Cardiac septum (tissue), 1 donor: ENCODE measurements at regions of chr13 and their contacts with region 1.

Region 1: DNA sequence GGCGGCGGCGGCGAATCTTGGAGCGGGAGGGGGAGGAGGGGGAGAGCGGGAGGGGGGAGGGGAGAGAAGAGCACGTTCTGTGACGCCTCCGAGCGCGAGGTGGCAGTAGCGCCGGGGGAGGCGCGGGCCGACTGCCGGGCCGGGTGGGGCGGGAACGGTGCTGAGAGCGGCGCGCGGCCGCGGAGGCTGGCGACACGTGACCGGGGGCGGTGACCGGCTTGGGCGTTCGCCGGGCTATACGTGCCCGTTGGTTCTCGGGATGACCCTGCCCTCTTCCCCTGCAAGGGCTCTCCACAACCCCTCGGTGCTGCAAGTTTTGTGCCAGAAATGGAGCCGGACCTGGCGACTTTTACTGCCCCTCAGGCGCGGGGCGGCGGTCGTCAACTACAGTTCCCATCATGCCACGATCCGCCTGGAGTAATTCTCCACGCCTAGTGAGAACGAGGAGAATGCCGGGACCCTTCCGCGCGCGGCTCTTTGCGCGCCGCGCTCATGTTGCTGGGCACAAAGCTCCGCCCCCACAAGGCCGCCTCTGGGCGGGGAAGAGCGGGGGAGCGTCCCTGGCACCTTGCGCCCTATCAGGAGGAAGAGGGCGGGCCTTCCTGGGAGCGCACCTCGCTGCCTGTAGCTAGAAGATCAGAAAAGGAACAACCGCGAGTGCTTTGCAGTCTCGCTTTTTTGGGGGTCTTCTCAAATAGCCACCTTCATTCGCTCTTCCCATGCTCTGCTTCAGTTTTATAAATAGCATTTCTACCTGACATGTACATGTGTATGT is at the start of gene KPNA3:
- DNase-seq: peak; percentile 98
- total RNA-seq, gene KPNA3: 46.7 TPM

Region 2: GRCh38 chr13:49690992-49691886 is 101.5 kb before region 1 on chr13 and contains the start of gene EBPL:
- intact Hi-C with region 1: loop called (anchors 2 kb)
- DNase-seq: peak; percentile 98
- total RNA-seq, gene EBPL: 6.7 TPM

Region 3: DNA sequence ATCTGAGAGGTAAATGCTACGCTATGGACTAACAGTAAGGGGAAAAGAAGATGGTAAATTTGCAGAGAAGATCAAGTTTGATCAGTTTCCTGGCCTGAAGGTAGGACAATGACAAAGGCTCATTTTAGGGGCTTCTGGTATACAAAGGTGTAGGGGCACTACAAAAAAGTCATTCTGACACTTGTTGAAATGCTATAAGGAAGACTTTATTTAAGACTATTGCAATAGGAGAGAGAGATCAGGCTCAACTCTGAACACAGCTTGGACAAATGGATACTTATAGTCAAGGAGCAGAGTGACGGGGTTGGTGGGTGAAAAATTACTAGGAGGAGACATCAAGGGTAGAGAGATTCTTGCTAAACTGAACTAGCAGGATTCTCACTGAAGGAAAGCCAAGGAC is 37.0 kb after region 1 on chr13:
- intact Hi-C with region 1: no loop called
- DNase-seq: no peak

Region 4: DNA sequence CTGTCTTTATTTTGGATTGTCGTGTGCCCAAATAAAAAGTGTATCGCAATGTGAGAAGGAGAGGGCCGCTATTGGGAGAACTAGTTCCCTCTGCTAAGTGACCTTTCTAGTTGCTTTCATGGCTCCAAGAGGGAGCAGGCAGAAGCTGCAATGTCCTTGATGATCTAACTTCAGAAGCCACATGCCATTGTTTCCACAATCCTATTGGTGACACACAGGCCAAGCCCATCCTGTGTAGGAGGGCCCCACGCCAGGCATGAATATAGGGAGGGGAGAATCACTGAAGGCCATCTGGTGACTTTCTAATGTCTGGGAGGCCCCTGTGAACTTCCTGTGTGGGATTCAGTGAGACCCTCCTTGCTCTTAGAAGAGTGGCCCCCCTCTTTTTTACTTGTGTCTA is 47.5 kb after region 1 on chr13:
- intact Hi-C with region 1: loop called (anchors 5 kb)
- DNase-seq: no peak

Region 5: GRCh38 chr13:49936085-49936940 is 143.6 kb after region 1 on chr13 and contains the start of gene SPRYD7:
- intact Hi-C with region 1: loop called (anchors 1 kb)
- DNase-seq: peak; percentile 100
- total RNA-seq, gene SPRYD7: 13.0 TPM

Region 6: GRCh38 chr13:50026788-50027473 is 234.2 kb after region 1 on chr13:
- intact Hi-C with region 1: no loop called
- DNase-seq: no peak

Region 7: GRCh38 chr13:50123862-50124536 is 331.3 kb after region 1 on chr13:
- intact Hi-C with region 1: no loop called
- DNase-seq: peak; percentile 95